CD8-positive, alpha-beta T cell (primary cell): ENCODE measurements at regions of chr17 and their contacts with region 1.

Region 1: GRCh38 chr17:57544834-57545463 is 200.2 kb downstream of the CCDC182 start:
- DNase-seq: no peak
- ATAC-seq: no peak
- H3K4me3 ChIP-seq: no peak overlapping the region
- H3K4me3 Mint-ChIP-seq: no peak overlapping the region
- H3K27ac ChIP-seq: no peak overlapping the region
- H3K27ac Mint-ChIP-seq: no peak overlapping the region
- H3K4me1 ChIP-seq: no peaks in the 10 kb centered on the region
- H3K4me1 Mint-ChIP-seq: peaks cover 46% of the 10 kb centered on the region
- H3K27me3 ChIP-seq: no peaks in the 10 kb centered on the region
- H3K27me3 Mint-ChIP-seq: no peaks in the 10 kb centered on the region
- CTCF ChIP-seq: no peak

Region 2: DNA sequence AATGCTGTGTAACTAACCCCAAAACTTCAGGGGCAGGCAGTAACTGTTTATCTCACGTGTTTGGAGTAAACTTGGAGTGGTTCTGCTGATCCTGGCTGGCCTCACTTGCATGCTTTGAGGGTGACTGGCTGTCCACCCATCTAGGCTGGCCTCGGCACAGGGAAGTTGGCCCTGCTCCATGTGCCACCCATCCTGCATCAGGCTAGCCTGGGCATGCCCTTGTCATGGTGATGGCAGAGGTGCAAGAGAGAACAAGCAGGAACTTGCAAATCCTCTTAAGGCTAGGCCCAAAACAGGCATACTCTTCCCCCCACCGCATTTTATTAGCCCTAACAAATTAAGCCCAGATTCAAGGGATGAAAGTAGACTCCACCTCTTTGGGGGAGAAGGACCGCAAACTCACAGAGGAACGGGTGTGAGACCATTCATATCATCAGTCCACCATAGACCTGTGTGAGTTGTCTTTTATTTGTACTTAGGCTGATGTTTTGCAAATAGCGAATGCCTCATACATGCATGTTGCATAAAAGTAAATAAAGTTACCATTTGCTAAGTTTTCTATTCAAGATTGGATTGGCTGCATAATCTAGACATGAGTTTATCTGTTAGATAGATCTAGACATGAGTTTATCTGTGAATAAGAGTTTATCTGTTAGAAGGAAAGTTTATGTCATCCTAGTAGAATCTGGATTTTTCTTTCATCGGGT is 20.9 kb before region 1 on chr17:
- CTCF ChIA-PET with region 1: no interaction called
- POLR2A ChIA-PET with region 1: no interaction called
- intact Hi-C with region 1: loop called in 1 of 2 experiments (anchors 2 kb)
- DNase-seq: no peak
- ATAC-seq: no peak
- H3K4me3 ChIP-seq: no peak overlapping the region
- H3K4me3 Mint-ChIP-seq: no peak overlapping the region
- H3K27ac ChIP-seq: no peak overlapping the region
- H3K27ac Mint-ChIP-seq: no peak overlapping the region
- H3K4me1 ChIP-seq: no peaks in the 10 kb centered on the region
- H3K4me1 Mint-ChIP-seq: peaks cover 17% of the 10 kb centered on the region
- H3K27me3 ChIP-seq: no peaks in the 10 kb centered on the region
- H3K27me3 Mint-ChIP-seq: no peaks in the 10 kb centered on the region
- CTCF ChIP-seq: no peak